ENCODE measurements at regions of chr4 and their contacts with region 1.

Region 1: GRCh38 chr4:140071806-140072205 is 82.2 kb downstream of the MAML3 start:
- DNase-seq: peak; percentile 16 to 85 (median 64)
- ATAC-seq: peak; percentile 93 to 95
- H3K4me3 Mint-ChIP-seq: peak overlapping the region; percentile 69 to 84 (median 78)
- H3K27ac Mint-ChIP-seq: peak overlapping the region; percentile 88 to 97 (median 92)
- H3K4me1 Mint-ChIP-seq: peaks cover 35 to 63% (median 53%) of the 10 kb centered on the region in 4 donors
- H3K27me3 Mint-ChIP-seq: peaks cover 0 to 4% (median 0%) of the 10 kb centered on the region in 5 donors

Region 2: GRCh38 chr4:139833151-139833910 is 238.5 kb before region 1 on chr4:
- POLR2A ChIA-PET with region 1: no interaction called
- DNase-seq: no peak
- ATAC-seq: no peak
- H3K4me3 Mint-ChIP-seq: no peak overlapping the region
- H3K27ac Mint-ChIP-seq: no peak overlapping the region
- H3K4me1 Mint-ChIP-seq: peaks cover 0 to 8% (median 0%) of the 10 kb centered on the region in 4 donors
- H3K27me3 Mint-ChIP-seq: peaks cover 0 to 2% (median 0%) of the 10 kb centered on the region in 5 donors

Region 3: GRCh38 chr4:140049024-140049848 is 22.6 kb before region 1 on chr4:
- POLR2A ChIA-PET with region 1: interaction called, 12 read pairs
- DNase-seq: peak; percentile 30 to 81 (median 63)
- ATAC-seq: peak; percentile 95 to 97
- H3K4me3 Mint-ChIP-seq: peak overlapping the region; percentile 78 to 94 (median 86)
- H3K27ac Mint-ChIP-seq: peak overlapping the region; percentile 84 to 97 (median 94)
- H3K4me1 Mint-ChIP-seq: peaks cover 20 to 62% (median 57%) of the 10 kb centered on the region in 4 donors
- H3K27me3 Mint-ChIP-seq: no peaks in the 10 kb centered on the region

Region 4: GRCh38 chr4:140061194-140061593 is 10.6 kb before region 1 on chr4:
- POLR2A ChIA-PET with region 1: interaction called, 13 read pairs
- DNase-seq: peak in 2 of 10 donors; percentile 36 to 49
- ATAC-seq: peak; percentile 85 to 90
- H3K4me3 Mint-ChIP-seq: peak overlapping the region in 9 of 10 donors; percentile 12 to 79 (median 74)
- H3K27ac Mint-ChIP-seq: peak overlapping the region; percentile 8 to 89 (median 79)
- H3K4me1 Mint-ChIP-seq: peaks cover 10 to 35% (median 23%) of the 10 kb centered on the region in 4 donors
- H3K27me3 Mint-ChIP-seq: peaks cover 0 to 2% (median 0%) of the 10 kb centered on the region in 5 donors

Region 5: GRCh38 chr4:140095694-140096482 is 24.1 kb after region 1 on chr4:
- POLR2A ChIA-PET with region 1: interaction called, 24 read pairs
- DNase-seq: peak in 9 of 10 donors; percentile 34 to 80 (median 56)
- ATAC-seq: peak; percentile 68 to 70
- H3K4me3 Mint-ChIP-seq: peak overlapping the region; percentile 71 to 88 (median 78)
- H3K27ac Mint-ChIP-seq: peak overlapping the region; percentile 84 to 98 (median 94)
- H3K4me1 Mint-ChIP-seq: peaks cover 48 to 88% (median 74%) of the 10 kb centered on the region in 4 donors
- H3K27me3 Mint-ChIP-seq: no peaks in the 10 kb centered on the region

Measured in naive thymus-derived CD8-positive, alpha-beta T cell (primary cell).